PC-9 (cell line): ENCODE measurements at regions of chr15 and their contacts with region 1.

Region 1: GRCh38 chr15:40344631-40345120 is 3.9 kb upstream of the CCDC9B start:
- DNase-seq: peak; percentile 44 to 52
- H3K4me3 ChIP-seq: peak overlapping the region; percentile 51; the same call in 1 of the 2 replicates
- H3K27ac ChIP-seq: peak overlapping the region; percentile 93; the same call in 1 of the 2 replicates
- H3K4me1 ChIP-seq: peaks cover 83% of the 10 kb centered on the region
- H3K27me3 ChIP-seq: no peaks in the 10 kb centered on the region
- CTCF ChIP-seq: peak; percentile 72

Region 2: DNA sequence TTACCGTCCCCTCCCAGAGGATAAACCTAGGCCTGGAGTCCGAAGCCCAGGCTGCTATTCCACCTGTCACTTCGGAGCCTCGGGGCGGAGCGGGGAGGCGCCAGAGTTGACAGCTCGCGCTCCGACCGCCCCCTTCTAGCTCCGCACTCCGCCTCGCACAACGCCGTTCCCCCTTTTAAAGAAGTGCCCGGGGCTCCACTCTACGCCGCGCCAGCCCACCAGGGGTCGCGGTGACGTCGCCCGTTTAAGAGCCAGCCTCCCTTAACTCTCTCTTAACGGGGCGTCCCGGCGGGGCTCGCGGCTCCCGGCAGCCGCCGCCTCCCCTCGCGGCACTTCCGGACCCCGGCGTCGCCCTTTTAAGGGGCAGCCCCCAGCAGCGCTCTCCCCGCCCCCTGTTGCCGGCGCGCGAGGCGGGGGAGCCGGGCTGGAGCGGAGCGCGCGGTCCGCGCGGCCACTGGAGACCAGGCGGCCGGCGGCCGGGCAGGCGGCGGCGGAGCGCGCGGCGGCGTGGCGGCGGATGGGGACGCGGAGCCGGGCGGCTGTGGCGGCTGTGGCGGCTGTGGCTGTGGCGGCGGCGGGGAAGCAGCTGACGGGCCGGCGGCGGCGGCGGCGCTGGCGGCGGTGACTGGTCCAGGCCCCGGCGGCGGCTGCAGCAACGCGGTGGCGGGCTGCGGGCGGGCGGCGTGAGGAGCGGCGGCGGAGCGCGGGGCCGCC is 21.3 kb before region 1 on chr15 and contains the start of gene INAFM2:
- CTCF ChIA-PET with region 1: interaction called, 14 read pairs
- POLR2A ChIA-PET with region 1: no interaction called
- intact Hi-C with region 1: no loop called
- DNase-seq: peak; percentile 59 to 81
- H3K4me3 ChIP-seq: peak within 1 kb of the TSS; percentile 59
- H3K27ac ChIP-seq: no peak within 1 kb of the TSS
- H3K4me1 ChIP-seq: peaks cover 10% of the 10 kb centered on the region; the same call in 1 of the 2 replicates
- H3K27me3 ChIP-seq: no peaks in the 10 kb centered on the region
- CTCF ChIP-seq: peak; percentile 50
- total RNA-seq, gene INAFM2: 2.4 and 3.1 TPM in 2 replicates

Region 3: GRCh38 chr15:40357723-40358470 is 13.2 kb after region 1 on chr15 and contains the start of gene DISP2:
- CTCF ChIA-PET with region 1: interaction called, 17 read pairs
- POLR2A ChIA-PET with region 1: no interaction called
- intact Hi-C with region 1: no loop called
- DNase-seq: peak; percentile 42 to 92
- H3K4me3 ChIP-seq: peak within 1 kb of the TSS; percentile 57
- H3K27ac ChIP-seq: no peak within 1 kb of the TSS
- H3K4me1 ChIP-seq: peaks cover 5% of the 10 kb centered on the region; the same call in 1 of the 2 replicates
- H3K27me3 ChIP-seq: no peaks in the 10 kb centered on the region
- CTCF ChIP-seq: no peak
- total RNA-seq, gene DISP2: 0.35 and 0.63 TPM in 2 replicates